Mammary epithelial cell (primary cell): ENCODE measurements at regions of chr9 and their contacts with region 1.

Region 1: DNA sequence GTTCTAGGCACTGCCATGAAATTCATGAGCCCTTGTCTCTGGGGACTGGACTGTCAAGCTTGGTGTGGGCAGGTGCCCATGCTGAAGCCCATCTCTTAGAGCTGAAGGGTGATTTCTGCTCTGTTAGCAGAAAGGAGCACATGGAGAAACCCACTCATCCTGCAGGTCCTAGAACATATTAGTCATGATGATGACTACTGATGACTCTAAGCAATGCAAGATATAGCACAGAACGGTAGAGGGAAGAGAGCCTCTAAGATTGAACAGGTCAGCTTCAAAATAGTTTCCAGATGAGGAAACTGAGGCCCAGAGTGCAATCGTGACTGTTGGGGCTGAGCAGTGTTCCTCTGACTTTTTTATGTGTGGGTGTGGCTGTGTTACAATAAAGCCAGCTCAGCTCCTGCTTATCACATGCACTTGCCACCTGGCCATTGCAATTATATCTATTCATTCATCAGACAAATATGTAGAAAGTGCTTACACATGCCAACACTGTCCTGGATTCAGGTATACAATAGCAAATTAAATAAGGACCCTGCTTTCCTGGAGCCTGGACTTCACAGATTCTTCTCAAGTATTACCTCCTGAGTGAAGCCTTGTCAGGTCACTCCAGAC is 140.2 kb upstream of the BRINP1 start:
- DNase-seq: peak; percentile 6
- H3K4me3 ChIP-seq: no peak overlapping the region
- H3K27ac ChIP-seq: no peak overlapping the region
- H3K4me1 ChIP-seq: no peaks in the 10 kb centered on the region
- H3K27me3 ChIP-seq: no peaks in the 10 kb centered on the region
- CTCF ChIP-seq: no peak

Region 2: DNA sequence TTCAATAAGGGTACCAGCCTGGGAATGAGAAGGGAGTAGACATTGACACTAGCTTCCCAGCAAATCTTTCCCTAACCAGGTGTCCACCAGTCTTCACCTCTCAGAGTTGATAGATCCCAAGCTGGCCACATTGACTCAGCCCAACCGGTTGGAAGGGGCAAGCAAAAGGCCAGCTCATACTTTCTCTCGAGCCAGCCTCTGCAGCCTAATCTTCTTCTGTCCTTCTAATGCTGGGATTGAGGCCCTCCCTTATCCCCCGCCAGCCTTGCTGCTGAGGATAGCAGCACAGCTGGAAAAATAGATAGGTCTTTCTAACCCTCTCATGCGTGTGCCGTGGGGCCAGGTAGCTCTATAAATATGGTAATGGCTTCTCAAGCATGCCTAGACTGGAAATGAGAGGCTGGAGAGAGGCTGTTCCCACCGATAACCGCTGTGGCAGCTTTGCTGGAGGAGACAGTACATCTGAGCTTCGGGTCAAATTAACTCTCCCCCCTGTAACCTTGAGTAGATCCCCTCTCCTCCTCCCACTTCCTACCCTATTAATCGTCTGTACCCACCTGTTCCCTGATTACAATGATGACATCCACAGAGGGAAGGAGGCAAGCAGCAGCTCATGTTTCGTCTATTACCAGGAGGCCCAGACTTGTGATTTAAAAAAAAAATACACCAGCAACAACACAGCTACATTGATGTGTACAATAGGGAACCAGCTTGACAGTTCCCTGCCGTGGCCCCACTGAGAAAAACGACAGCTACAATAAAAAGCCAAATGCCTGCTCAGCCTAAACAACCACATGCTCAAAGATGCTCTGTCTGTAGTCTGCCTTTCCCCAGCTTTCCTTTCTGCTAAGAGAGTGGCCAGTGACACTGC is 79.7 kb after region 1 on chr9:
- CTCF ChIA-PET with region 1: no interaction called
- dilution Hi-C with region 1: loop called (anchors 5 kb)
- in situ Hi-C with region 1: no loop called
- intact Hi-C with region 1: no loop called
- DNase-seq: no peak
- H3K4me3 ChIP-seq: no peak overlapping the region
- H3K27ac ChIP-seq: no peak overlapping the region
- H3K4me1 ChIP-seq: no peaks in the 10 kb centered on the region
- H3K27me3 ChIP-seq: no peaks in the 10 kb centered on the region
- CTCF ChIP-seq: no peak

Region 3: GRCh38 chr9:120091206-120091605 is 581.8 kb after region 1 on chr9:
- CTCF ChIA-PET with region 1: no interaction called
- dilution Hi-C with region 1: no loop called
- in situ Hi-C with region 1: no loop called
- intact Hi-C with region 1: no loop called
- DNase-seq: no peak
- H3K4me3 ChIP-seq: no peak overlapping the region
- H3K27ac ChIP-seq: no peak overlapping the region
- H3K4me1 ChIP-seq: no peaks in the 10 kb centered on the region
- H3K27me3 ChIP-seq: no peaks in the 10 kb centered on the region
- CTCF ChIP-seq: no peak